ENCODE measurements at regions of chr7 and their contacts with region 1.

Region 1: GRCh38 chr7:26365077-26365900 is 73.6 kb downstream of the SNX10 start:
- DNase-seq: peak; percentile 41 to 92
- H3K4me3 ChIP-seq: no peak overlapping the region
- H3K27ac ChIP-seq: no peak overlapping the region
- H3K4me1 ChIP-seq: peaks cover 0 to 30% (median 11%) of the 10 kb centered on the region in 4 donors
- H3K27me3 ChIP-seq: peaks cover 0 to 46% (median 0%) of the 10 kb centered on the region in 3 donors
- CTCF ChIP-seq: peak in 5 of 7 experiments; percentile 43 to 86 (median 74)
- EP300 ChIP-seq: no peak
- POLR2A ChIP-seq: no peak

Region 2: DNA sequence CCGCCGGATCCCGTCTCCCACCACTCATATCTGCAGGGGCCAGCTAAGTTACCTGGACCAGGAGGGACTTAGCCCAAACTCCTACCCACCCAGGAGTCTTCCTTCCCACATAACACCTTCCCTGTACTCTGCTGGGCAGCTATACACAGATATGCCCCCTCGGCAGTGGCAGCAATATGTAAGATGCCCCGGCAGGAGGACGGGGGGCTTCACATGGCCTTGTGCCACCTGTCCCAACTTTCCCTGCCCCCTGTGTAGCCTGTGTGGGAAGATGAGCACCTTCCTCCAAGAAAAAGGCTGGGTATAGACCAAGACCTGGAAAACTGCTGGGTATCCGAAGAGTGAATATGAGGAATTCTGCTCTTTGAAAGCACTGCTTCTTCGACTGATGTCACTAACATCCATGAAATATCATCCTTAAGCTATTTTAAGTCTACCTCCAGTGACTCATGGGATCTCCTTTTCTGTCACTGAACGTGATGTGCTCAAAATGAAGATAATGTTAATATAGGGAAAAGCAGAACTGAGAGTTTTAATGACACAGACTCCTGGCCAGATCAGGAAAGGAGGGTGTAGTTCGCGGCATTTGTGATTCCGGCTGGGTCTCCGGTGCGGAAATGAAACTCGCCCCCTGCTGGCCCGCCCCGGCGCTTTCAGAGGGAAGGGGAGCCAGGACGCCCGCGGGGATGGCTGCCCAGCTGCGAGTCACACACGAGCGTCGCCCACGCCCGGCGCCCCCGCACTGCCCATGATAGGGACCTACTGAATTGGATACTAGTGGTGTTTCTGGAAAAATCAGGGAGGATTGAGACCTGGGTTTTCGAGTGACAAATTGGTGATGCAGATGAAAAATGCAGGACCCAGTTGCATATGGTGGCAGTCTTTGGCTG is 470.1 kb before region 1 on chr7:
- intact Hi-C with region 1: loop called (anchors 5 kb)
- DNase-seq: peak; percentile 79 to 87
- H3K4me3 ChIP-seq: peak overlapping the region; percentile 18 to 32 (median 24)
- H3K27ac ChIP-seq: peak overlapping the region in 2 of 5 donors; percentile 14 to 41
- H3K4me1 ChIP-seq: peaks cover 4 to 27% (median 18%) of the 10 kb centered on the region in 4 donors
- H3K27me3 ChIP-seq: peaks cover 0 to 28% (median 0%) of the 10 kb centered on the region in 3 donors
- CTCF ChIP-seq: peak in 4 of 7 experiments; percentile 68 to 84 (median 76)
- EP300 ChIP-seq: no peak
- POLR2A ChIP-seq: no peak

Region 3: DNA sequence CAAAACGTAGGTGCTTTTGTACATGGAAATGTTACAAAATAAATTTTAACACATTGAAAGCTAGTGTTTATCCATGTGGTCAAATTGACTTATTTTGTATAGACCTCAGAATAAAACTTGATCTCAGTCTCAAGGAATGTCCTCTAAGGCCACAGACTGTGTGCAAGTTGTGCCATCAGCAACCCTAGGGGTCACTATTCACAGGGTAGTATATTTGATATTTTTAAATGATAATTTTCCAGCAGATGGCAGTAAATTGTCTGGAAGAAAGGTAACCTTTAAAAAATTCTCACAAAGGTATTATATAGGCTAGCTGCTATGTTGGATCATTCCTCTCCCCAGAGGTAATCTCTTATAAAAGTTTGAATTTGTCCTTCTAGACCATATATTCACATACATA is 86.5 kb before region 1 on chr7:
- intact Hi-C with region 1: no loop called
- DNase-seq: no peak
- H3K4me3 ChIP-seq: no peak overlapping the region
- H3K27ac ChIP-seq: no peak overlapping the region
- H3K4me1 ChIP-seq: no peaks in the 10 kb centered on the region
- H3K27me3 ChIP-seq: no peaks in the 10 kb centered on the region
- CTCF ChIP-seq: no peak
- EP300 ChIP-seq: no peak
- POLR2A ChIP-seq: no peak

Region 4: DNA sequence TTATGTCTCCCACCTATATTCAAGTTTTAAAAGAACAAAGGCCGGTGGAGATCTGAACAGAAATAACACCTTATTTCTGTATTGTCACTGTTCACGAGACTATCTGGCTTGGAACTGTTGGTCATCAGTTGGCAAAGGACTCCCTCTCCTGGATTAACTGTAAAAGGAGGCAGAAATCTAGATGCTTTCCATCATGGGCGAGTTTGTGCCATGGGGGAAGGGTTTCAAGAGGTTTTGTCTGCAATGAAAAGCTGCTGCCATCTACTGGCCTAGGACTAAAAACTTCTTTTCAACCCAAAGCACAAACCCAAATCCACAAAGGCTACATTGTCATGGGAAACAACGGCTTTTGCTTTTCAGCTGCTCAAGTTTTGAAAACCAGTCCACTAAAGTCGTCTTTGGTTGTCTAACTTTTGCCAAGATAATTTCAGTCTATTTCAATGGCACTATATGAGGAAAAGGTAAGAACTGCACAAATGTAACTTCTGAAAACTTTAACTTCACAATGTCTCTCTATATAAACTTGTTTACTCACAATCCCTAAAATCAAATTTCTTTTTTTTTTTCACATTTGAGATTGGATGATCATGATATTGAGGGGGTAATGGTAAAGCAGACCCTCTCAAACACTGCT is 302.3 kb after region 1 on chr7:
- intact Hi-C with region 1: loop called (anchors 5 kb)
- DNase-seq: peak; percentile 53 to 97
- H3K4me3 ChIP-seq: no peak overlapping the region
- H3K27ac ChIP-seq: no peak overlapping the region
- H3K4me1 ChIP-seq: peaks cover 0 to 16% (median 6%) of the 10 kb centered on the region in 4 donors
- H3K27me3 ChIP-seq: peaks cover 0 to 4% (median 0%) of the 10 kb centered on the region in 3 donors
- CTCF ChIP-seq: peak in 5 of 7 experiments; percentile 32 to 95 (median 60)
- EP300 ChIP-seq: no peak
- POLR2A ChIP-seq: no peak

Region 5: DNA sequence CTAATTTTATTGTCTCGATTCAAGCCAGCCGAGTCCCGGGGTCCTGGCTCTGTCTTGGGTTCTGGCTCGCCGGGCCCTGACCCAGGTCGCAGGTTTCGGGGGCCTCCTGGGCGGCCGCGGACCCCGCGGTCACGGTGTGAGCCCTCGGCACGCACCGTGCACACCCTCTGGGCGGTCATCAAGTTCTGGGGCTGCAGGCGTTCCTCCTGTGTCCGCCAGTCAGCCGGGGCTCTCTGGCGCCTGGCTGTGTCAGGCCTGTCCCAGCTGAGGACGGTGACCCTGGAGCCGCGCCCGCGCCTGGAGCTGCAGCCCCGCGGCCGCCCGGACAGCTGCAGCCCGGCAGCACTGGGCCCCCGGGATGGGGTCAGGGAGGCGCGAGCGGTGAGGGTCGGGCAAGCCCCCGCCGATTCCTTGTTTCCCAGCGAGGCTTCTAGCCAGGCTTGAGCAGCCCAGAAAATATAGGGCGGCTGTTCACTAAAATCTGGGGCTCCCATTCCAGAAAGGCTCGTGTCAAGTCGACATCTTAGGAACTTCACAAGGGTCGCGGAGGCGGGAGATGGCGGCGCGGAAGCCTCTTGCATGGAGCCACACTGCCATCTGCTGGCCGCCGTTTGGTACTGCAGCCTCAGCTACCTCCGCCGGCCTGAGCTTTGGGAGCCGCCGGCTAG is 795.4 kb after region 1 on chr7:
- intact Hi-C with region 1: loop called (anchors 5 kb)
- DNase-seq: peak; percentile 88 to 95
- H3K4me3 ChIP-seq: peak overlapping the region; percentile 54 to 67 (median 60)
- H3K27ac ChIP-seq: peak overlapping the region in 2 of 5 donors; percentile 34 to 99
- H3K4me1 ChIP-seq: peaks cover 16 to 56% (median 49%) of the 10 kb centered on the region in 4 donors
- H3K27me3 ChIP-seq: peaks cover 26 to 100% (median 91%) of the 10 kb centered on the region in 3 donors
- CTCF ChIP-seq: peak in 6 of 7 experiments; percentile 70 to 100 (median 98)
- EP300 ChIP-seq: no peak
- POLR2A ChIP-seq: no peak